Motor neuron (in vitro differentiated cells): ENCODE measurements at regions of chr5 and their contacts with region 1.

Region 1: GRCh38 chr5:147576646-147577535 is 67.0 kb upstream of the DPYSL3 start:
- ATAC-seq: peak in 6 of 8 experiments; percentile 35 to 73 (median 56)
- H3K4me3 ChIP-seq: no peak overlapping the region
- H3K27ac ChIP-seq: no peak overlapping the region
- H3K4me1 ChIP-seq: peaks cover 4 to 9% of the 10 kb centered on the region in 2 donors

Region 2: DNA sequence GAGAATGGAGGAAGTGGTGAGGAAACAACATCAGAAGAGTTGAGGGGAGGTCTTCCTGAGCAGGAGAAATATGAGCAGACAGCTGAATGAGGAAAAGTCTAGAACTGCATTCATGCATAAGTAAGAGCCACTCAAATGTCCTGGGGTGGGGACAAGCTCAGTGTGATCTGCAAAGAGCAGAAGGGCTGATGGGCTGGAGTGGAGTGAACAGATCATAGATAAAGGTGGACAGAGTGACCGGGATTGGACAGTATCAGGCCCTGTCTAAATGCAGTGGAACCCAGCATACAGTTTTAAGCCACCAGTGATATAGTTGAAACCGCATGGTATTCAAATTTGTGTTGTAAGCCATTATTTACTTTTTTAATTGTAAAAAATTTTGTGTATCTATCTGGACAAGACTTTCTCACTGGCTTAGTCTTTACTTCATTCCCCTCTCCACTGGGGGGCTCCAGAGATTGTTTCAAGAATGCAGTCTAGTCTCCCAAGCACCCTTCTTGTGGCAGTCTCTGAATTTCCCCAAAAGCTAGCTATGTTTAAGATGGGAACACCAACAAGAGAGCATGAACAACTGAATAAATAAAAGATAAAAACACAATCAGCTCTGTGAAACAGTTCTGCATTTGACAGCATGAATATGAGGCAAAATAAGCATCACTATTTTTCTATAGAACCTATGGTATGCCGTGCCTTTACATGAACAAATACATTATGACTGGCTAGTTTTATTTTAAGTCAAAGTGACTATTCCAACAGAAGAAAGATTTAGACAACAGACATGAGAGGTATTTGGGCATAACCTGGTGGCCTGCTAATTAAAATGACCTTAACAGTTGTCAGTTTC is 352.7 kb before region 1 on chr5:
- in situ Hi-C with region 1: loop called in 5 of 9 experiments (anchors 10 to 25 kb)
- ATAC-seq: peak in 6 of 8 experiments; percentile 37 to 90 (median 77)
- H3K4me3 ChIP-seq: no peak overlapping the region
- H3K27ac ChIP-seq: no peak overlapping the region
- H3K4me1 ChIP-seq: no peaks in the 10 kb centered on the region

Region 3: GRCh38 chr5:147234825-147235635 is 341.9 kb before region 1 on chr5 and contains the start of gene STK32A:
- in situ Hi-C with region 1: loop called in 3 of 9 experiments (anchors 25 kb)
- ATAC-seq: peak; percentile 91 to 100 (median 99)
- H3K4me3 ChIP-seq: peak within 1 kb of the TSS; percentile 39 to 89 (median 48)
- H3K27ac ChIP-seq: peak within 1 kb of the TSS in 1 of 2 donors; percentile 47
- H3K4me1 ChIP-seq: peaks cover 2 to 6% of the 10 kb centered on the region in 2 donors
- total RNA-seq, gene STK32A: 4.2 to 58.6 (median 26.5) TPM

Region 4: DNA sequence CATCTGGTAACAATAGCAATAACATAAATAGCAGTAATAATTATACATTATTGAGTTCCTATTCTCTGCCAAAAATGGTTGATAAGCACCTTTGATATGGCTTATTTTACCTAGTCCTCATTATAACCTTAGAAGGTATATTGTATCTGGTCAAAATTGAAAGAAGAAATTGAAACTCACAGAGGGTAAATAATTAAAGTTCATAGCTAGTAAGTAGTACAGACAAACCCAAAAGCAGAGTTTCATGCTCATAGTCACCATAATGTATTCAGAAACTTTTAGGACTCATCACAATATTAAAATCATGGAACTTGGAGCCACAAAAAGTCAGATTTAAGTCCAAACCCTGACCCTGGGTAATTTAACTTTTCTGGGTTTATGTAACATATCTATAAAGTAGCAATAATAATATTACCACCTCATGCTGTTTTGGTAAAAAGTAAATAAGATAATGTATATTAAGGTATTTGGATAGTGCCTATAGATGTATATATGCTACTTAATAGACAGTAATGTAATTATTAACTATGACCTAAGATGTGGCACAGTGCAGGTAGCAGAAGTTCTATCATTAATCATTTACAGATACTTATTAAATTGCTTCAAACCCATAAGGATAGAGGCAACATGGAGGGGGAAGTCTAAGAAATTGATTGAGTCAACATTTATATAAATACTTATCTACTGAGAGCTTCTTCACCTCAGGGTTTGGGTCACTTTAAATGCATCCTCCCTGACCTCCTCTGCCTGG is 309.6 kb before region 1 on chr5:
- in situ Hi-C with region 1: no loop called
- ATAC-seq: no peak
- H3K4me3 ChIP-seq: no peak overlapping the region
- H3K27ac ChIP-seq: no peak overlapping the region
- H3K4me1 ChIP-seq: no peaks in the 10 kb centered on the region

Region 5: DNA sequence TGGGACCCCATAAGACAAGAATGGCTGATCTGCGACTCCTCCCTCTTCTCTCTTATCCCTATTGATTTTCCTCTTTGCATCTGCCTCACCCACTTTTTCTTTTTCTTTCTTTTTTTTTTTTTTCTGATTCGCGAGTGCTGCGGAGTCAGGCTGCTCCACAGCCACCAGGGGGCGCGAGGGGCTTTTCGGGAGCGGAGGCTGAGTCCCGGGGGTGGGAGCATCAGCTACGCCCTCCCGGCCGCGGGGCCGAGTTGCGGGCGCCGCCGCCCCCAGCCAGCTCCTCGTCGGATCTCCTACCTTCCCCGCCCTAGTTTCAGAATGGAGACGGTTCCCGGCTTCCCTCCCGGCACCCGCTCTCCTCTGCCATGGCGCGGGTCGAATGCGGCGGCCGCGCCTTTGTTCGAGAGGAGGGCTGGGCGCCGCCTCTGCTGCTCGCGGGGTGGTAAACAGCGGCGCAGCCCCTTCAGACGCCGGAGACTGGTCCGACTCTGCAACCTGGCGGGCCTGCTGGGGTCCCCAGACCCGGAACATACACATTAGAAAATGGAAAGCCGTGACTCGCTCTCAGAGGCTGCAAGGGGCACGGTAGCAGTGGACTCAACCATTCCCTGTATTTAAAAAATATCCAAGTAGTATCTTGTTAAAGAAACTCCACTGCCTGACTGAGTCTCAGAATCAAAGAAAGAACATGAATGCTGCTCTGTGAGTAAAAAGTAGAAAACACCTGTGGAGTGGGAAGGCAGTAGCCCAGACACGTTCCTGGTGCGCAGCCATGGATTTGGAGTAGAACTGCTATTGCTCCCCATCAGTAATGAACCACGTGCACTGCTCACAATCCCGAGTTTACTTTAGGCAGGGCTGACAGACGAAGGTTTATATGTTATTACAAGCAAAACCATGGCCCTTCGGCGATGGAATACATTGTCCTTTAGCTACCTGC is 122.7 kb before region 1 on chr5:
- in situ Hi-C with region 1: loop called in 8 of 9 experiments (anchors 10 to 25 kb)
- ATAC-seq: peak; percentile 71 to 82 (median 80)
- H3K4me3 ChIP-seq: peak overlapping the region; percentile 58 to 97 (median 76)
- H3K27ac ChIP-seq: peak overlapping the region; percentile 91 to 94
- H3K4me1 ChIP-seq: peaks cover 11 to 26% of the 10 kb centered on the region in 2 donors

Region 6: DNA sequence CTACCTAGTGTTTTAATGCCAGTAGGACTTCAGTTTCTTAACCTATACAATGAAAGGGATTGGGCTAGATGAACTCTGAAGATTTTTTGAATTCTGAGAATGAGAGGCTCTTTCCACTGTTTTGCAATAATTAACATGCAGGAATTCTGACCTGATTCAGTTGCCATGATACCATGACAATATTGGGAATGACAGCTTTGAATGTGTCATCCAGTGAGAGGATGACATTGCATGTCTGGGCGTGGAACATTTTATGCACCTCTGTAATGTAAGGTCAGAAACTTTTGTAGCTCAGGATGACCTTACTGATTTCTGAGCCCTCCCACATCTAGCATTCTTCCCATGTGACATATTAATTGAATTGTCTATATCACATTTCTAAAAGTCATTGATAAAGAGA is 456.3 kb after region 1 on chr5:
- in situ Hi-C with region 1: no loop called
- ATAC-seq: peak; percentile 57 to 99 (median 80)
- H3K4me3 ChIP-seq: no peak overlapping the region
- H3K27ac ChIP-seq: peak overlapping the region in 1 of 2 donors; percentile 33
- H3K4me1 ChIP-seq: peaks cover 0 to 3% of the 10 kb centered on the region in 2 donors